Adrenal gland (tissue), 19 donors: ENCODE measurements at regions of chr1 and their contacts with region 1.

Region 1: DNA sequence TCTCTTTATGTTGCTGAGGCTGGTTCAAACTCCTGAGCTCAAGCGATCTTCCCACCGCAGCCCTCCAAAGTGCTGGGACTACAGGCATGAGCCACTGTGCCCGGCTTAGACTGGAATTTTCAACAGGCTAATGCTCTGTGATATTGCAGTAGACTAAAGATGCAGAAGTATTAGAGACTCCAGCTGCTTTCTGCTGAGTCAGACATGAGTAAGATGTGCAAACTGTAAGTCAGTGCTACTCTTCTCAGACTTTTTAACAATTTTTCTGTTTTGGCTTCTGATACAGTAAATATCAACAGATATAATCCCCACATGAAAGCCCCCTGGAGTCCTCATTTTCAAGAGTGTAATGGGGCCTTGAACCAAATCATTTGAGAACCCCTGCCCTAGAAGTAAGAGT is 29.3 kb upstream of the NLRP3 start:
- DNase-seq: no peak
- H3K4me3 ChIP-seq: no peak overlapping the region
- H3K27ac ChIP-seq: no peak overlapping the region
- H3K4me1 ChIP-seq: peaks cover 0 to 4% of the 10 kb centered on the region in 2 donors
- H3K27me3 ChIP-seq: no peaks in the 10 kb centered on the region
- CTCF ChIP-seq: no peak
- POLR2A ChIP-seq: no peak

Region 2: DNA sequence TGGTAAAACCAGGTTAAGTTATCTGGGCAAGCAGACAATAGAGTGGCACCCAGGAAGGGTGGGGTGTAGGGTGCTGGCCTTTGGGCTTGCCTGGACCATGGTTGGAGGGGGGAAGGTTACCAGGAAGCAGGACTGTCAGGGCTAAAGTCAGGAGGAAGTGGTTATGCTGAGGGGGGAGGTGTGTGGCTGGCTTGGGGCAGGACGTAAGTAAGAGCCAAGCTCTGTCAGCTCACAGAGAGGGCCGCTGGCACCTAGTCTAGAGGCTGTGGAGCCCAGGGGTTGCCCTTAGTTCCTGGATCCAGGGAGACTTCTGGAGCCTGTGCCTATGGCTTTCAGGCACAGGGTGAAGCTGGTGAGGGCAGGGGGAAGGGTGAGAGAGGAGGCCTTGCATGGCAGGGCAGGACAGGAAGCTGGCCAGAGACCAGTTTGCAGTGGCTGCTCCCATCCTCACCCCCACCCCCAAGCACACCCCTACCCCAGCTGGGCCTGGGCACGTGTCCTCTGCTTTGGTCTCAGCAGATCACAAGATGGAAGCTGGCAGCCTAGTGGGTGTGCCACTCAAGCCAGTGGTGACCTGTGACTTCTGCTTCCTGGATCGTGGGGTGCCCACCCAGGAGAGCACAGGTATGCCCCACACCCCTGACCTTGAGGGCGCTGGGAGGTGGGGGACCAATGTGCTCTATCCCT is 859.1 kb before region 1 on chr1:
- intact Hi-C with region 1: no loop called
- DNase-seq: no peak
- H3K4me3 ChIP-seq: no peak overlapping the region
- H3K27ac ChIP-seq: no peak overlapping the region
- H3K4me1 ChIP-seq: no peaks in the 10 kb centered on the region
- H3K27me3 ChIP-seq: no peaks in the 10 kb centered on the region
- CTCF ChIP-seq: no peak
- POLR2A ChIP-seq: no peak

Region 3: GRCh38 chr1:247487057-247487456 is 100.4 kb after region 1 on chr1:
- intact Hi-C with region 1: loop called in 1 of 2 experiments (anchors 10 kb)
- DNase-seq: peak in 2 of 7 donors; percentile 19 to 21
- H3K4me3 ChIP-seq: no peak overlapping the region
- H3K27ac ChIP-seq: no peak overlapping the region
- H3K4me1 ChIP-seq: no peaks in the 10 kb centered on the region
- H3K27me3 ChIP-seq: no peaks in the 10 kb centered on the region
- CTCF ChIP-seq: peak in 4 of 6 experiments; percentile 42 to 60 (median 50)
- POLR2A ChIP-seq: no peak